Thyroid gland (tissue), 4 donors: ENCODE measurements at regions of chr9 and their contacts with region 1.

Region 1: GRCh38 chr9:87812375-87813118 is 70.1 kb upstream of the SPATA31E1 start:
- DNase-seq: no peak
- H3K4me3 ChIP-seq: no peak overlapping the region
- H3K27ac ChIP-seq: no peak overlapping the region
- H3K4me1 ChIP-seq: no peaks in the 10 kb centered on the region
- H3K27me3 ChIP-seq: no peaks in the 10 kb centered on the region
- CTCF ChIP-seq: peak; percentile 37 to 83 (median 62)
- POLR2A ChIP-seq: no peak

Region 2: DNA sequence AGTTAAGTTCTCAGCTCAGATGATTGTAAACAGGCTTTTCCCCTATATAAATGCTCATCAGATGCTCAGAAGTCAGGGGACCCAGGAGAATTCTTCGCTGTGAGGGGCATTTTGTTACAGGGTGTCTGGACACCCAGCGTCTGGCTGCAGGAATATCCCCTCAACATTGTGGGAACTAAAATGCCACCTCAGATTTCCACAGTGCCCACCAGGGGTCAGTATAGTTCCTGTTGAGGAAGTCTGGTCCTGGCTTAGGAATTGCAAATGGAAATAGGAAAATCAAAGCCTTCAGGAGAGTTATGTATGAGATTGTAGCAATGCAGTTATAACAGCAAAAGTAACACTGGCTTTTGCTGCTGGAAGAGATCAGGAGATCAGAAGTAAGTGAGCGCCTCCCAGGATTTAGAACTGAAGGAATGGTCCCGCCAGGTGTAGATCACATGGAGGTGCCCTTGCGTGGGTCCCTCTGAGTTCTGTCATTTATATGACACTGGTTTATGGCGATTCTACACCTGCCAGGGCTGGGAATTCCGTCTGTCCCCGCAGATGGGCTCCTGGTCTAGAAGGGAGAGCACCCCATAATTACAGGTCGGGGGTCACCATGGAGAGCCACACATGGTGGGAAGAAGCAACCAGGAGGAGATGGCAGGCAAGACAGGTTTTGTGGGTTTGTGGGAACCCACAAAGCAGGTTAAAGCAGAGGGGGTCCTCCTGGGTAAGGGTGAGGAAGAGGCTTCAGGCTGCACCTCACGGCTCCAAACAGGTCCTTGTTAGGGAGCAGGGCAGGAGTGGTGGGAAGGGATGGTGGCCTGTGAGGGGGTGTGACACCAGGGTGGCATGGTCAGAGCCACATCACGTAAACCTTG is 133.7 kb before region 1 on chr9:
- intact Hi-C with region 1: loop called (anchors 5 kb)
- DNase-seq: peak; percentile 41 to 47
- H3K4me3 ChIP-seq: no peak overlapping the region
- H3K27ac ChIP-seq: no peak overlapping the region
- H3K4me1 ChIP-seq: peaks cover 11 to 20% of the 10 kb centered on the region in 2 donors
- H3K27me3 ChIP-seq: no peaks in the 10 kb centered on the region
- CTCF ChIP-seq: peak; percentile 54 to 77 (median 66)
- POLR2A ChIP-seq: no peak